Natural killer cell (primary cell): ENCODE measurements at regions of chr2 and their contacts with region 1.

Region 1: DNA sequence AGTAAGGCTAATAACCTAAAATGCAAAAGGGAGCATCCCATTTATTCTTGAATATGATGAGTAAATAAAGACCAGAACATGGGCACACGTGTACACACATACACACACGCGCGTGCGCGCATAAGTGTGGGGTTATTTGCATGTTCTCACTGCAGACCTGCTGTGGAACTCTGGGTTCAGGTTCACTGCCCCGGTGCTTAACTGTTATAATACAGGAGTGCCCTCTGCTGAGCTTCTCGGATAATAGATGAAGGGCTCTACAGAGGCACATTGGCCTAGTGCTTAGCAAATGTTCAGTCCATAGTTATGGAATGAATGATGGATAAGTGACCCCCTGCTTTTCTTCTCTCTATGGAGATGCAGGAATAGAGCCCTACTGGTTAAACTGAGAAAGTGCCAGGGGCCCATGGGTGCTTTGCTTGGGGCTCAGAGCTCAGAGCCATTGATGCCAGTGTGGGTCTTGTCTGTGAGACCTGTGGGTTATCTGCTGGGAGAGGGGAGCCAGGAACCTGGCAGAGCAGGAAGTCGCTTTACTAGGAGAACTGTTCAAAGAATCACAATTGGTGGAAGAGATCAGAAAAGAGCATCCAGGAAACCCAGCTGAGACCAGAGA is 3.6 kb upstream of the ARL4C start:
- DNase-seq: peak; percentile 47 to 90
- ATAC-seq: peak; percentile 39 to 62 (median 47)
- H3K4me3 ChIP-seq: no peak overlapping the region
- H3K4me3 Mint-ChIP-seq: peak overlapping the region; percentile 68
- H3K27ac ChIP-seq: no peak overlapping the region
- H3K27ac Mint-ChIP-seq: peak overlapping the region; percentile 91 to 95
- H3K4me1 ChIP-seq: peaks cover 26% of the 10 kb centered on the region
- H3K4me1 Mint-ChIP-seq: peaks cover 38% of the 10 kb centered on the region in 2 donors
- H3K27me3 ChIP-seq: no peaks in the 10 kb centered on the region
- H3K27me3 Mint-ChIP-seq: peaks cover 4 to 23% of the 10 kb centered on the region in 2 donors
- CTCF ChIP-seq: peak; percentile 71

Region 2: DNA sequence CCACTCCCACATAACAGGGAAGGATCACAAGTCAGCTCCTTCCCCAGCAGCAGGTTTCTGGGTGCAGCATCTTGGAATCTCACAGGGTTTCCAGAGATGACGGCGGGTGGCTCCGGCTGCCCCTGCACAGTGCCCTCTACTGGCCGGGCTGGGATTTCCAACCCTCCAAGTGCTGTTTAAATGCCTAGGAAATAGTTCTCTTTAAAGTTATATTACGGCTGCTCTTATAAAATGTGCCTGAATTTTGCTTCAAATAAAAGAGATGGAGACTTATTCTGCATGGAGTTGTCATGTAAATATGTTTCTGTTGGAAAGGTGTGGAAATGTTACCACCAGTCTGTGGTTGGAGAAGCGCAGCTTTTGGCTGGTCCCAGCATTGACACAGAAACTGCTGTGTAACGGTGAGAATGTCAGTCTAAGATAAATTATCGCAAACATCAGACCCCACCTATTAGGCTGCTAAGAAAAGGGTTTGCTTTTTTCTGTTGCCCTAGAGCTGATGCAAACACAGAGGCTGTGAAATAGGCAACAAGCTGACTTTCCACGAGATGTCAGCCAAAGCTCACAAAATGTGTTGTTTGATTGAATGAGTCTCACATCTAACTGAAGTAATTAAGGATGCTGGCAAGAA is 642.9 kb before region 1 on chr2:
- intact Hi-C with region 1: loop called (anchors 5 kb)
- DNase-seq: peak; percentile 45 to 68
- ATAC-seq: peak in 1 of 3 donors; percentile 53
- H3K4me3 ChIP-seq: no peak overlapping the region
- H3K4me3 Mint-ChIP-seq: no peak overlapping the region
- H3K27ac ChIP-seq: no peak overlapping the region
- H3K27ac Mint-ChIP-seq: no peak overlapping the region
- H3K4me1 ChIP-seq: peaks cover 19% of the 10 kb centered on the region
- H3K4me1 Mint-ChIP-seq: peaks cover 18 to 24% of the 10 kb centered on the region in 2 donors
- H3K27me3 ChIP-seq: no peaks in the 10 kb centered on the region
- H3K27me3 Mint-ChIP-seq: peaks cover 0 to 7% of the 10 kb centered on the region in 2 donors
- CTCF ChIP-seq: peak; percentile 83